PC-9 (cell line): ENCODE measurements at regions of chr2 and their contacts with region 1.

Region 1: DNA sequence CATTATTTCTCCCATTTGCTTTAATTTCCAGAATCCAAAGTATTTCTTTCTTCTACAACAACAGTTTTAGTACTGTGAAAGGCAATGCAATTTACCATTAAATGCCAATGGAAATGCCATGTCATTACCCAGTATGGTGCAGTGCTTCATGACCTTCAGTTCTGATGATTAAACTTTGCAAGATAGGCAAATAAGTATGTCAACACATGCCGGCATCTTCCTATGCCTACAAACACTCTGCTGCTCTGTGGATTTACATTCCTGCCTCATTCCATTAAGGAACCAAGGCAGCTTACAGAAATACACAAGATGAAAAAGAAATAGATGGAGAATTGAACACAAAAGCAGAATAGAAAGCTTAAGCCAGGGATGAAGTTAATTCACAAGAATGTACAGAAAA is 52.7 kb upstream of the PROKR1 start:
- DNase-seq: no peak
- H3K4me3 ChIP-seq: no peak overlapping the region
- H3K27ac ChIP-seq: no peak overlapping the region
- H3K4me1 ChIP-seq: no peaks in the 10 kb centered on the region
- H3K27me3 ChIP-seq: no peaks in the 10 kb centered on the region
- CTCF ChIP-seq: no peak

Region 2: DNA sequence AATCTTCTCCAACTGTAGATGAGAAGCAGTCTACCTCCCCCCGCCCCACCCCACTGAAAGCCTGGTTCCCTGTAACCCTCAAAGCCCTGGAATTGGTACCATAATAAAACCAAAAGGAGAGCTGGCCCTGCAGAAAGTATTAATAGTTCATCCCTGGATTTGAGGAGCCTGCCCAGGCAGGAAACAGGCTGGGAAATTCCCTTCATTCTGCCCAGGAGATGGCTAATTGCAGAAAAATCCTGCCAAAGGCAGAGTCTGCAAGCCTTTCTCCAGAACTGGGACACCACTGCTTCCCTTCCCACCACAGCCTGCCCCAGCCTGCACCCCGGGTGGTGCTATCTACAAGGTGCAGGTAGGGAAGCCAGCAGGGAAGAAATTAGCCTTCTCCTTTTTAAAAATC is 345.7 kb after region 1 on chr2:
- CTCF ChIA-PET with region 1: interaction called, 14 read pairs
- POLR2A ChIA-PET with region 1: no interaction called
- intact Hi-C with region 1: no loop called
- DNase-seq: no peak
- H3K4me3 ChIP-seq: no peak overlapping the region
- H3K27ac ChIP-seq: no peak overlapping the region
- H3K4me1 ChIP-seq: no peaks in the 10 kb centered on the region
- H3K27me3 ChIP-seq: no peaks in the 10 kb centered on the region
- CTCF ChIP-seq: no peak